SK-N-SH (cell line): ENCODE measurements at regions of chr3 and their contacts with region 1.

Region 1: DNA sequence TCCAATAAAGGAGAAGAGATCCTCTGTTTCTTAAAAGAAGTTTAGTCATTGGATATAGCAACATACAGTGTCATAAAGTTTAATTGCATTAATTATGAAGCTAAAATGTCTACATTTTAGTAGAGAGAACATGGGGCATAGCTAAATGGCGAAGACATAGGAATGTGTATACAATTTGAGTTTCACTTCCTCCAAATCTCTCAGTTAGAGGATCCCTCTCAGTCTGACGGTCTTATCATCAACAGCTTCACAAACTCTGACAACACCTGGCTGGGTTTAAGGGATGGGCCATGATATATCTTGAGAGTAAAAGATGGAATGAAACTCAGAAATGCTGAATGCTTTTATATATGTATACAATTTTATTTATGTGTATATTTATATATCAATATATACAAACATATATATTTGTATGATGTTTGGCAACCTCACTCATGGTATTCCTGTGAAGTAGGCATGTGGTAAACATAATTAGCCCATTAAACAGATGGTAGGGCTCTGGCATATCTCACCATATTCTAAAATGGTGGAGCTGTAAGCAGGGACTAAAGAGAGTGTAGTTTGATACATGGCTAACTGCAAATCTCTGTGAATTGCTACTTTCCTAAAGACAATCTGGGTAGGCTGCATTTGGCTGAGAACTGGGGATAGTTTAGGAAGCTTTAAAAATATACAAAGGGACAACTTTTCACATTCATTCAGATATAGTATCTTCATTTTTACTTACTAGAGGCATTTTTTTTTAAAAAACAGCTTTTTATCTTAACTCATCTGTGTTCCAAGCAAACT is 111.6 kb downstream of the TIGIT start:
- DNase-seq: no peak
- H3K4me3 ChIP-seq: no peak overlapping the region
- H3K27ac ChIP-seq: peak overlapping the region in 1 of 2 experiments; percentile 46; a peak in 1 of 4 replicates
- H3K4me1 ChIP-seq: peaks cover 19 to 27% of the 10 kb centered on the region in 2 experiments; a peak in 3 of 4 replicates
- H3K27me3 ChIP-seq: no peaks in the 10 kb centered on the region
- CTCF ChIP-seq: no peak
- EP300 ChIP-seq: no peak
- RAD21 ChIP-seq: no peak

Region 2: GRCh38 chr3:113428581-113428980 is 976.8 kb before region 1 on chr3:
- CTCF ChIA-PET with region 1: no interaction called
- POLR2A ChIA-PET with region 1: no interaction called
- DNase-seq: no peak
- H3K4me3 ChIP-seq: no peak overlapping the region
- H3K27ac ChIP-seq: no peak overlapping the region
- H3K4me1 ChIP-seq: no peaks in the 10 kb centered on the region
- H3K27me3 ChIP-seq: no peaks in the 10 kb centered on the region
- CTCF ChIP-seq: no peak
- EP300 ChIP-seq: no peak
- RAD21 ChIP-seq: no peak

Region 3: GRCh38 chr3:114393367-114394072 is 11.9 kb before region 1 on chr3:
- CTCF ChIA-PET with region 1: interaction called, 13 read pairs
- POLR2A ChIA-PET with region 1: no interaction called
- DNase-seq: no peak
- H3K4me3 ChIP-seq: no peak overlapping the region
- H3K27ac ChIP-seq: no peak overlapping the region
- H3K4me1 ChIP-seq: no peaks in the 10 kb centered on the region
- H3K27me3 ChIP-seq: no peaks in the 10 kb centered on the region
- CTCF ChIP-seq: no peak
- EP300 ChIP-seq: no peak
- RAD21 ChIP-seq: no peak